ENCODE measurements at regions of chr3 and their contacts with region 1.

Region 1: DNA sequence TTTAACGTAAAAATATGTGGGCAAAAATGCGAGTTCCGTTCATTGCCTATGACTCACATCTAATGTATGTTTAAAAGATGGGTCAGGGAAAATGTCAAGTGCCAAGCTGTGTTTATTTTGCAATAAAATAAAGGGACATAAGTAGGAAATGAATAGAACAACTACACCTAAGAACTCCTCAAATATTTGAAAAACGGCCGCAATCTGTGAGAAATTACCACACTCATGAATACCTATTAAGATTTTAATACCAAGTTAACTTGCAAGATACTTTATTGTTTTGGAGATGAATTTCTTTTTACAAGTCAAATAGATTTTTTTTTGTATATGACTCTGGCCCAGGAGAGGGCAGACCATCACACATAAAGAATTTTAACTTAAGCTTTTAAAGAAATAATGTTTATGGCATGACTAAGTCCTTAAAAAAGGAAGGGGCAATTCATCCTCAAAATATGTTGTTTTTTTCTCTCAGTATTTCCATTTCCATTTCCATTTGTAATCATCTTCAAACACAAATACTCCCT is 152.7 kb downstream of the SUCNR1 start:
- DNase-seq: peak; percentile 95
- H3K4me3 ChIP-seq: peak overlapping the region in 1 of 3 experiments; percentile 41
- H3K27ac ChIP-seq: peak overlapping the region; percentile 89
- H3K4me1 ChIP-seq: peaks cover 41% of the 10 kb centered on the region
- H3K27me3 ChIP-seq: no peaks in the 10 kb centered on the region
- CTCF ChIP-seq: peak; percentile 16 to 19
- POLR2A ChIP-seq: peak; percentile 45

Region 2: GRCh38 chr3:151864423-151865101 is 161.5 kb before region 1 on chr3:
- CTCF ChIA-PET with region 1: no interaction called
- POLR2A ChIA-PET with region 1: no interaction called
- dilution Hi-C with region 1: no loop called
- intact Hi-C with region 1: loop called (anchors 2 kb)
- DNase-seq: peak; percentile 84
- H3K4me3 ChIP-seq: peak overlapping the region in 1 of 3 experiments; percentile 17
- H3K27ac ChIP-seq: peak overlapping the region; percentile 66
- H3K4me1 ChIP-seq: peaks cover 31% of the 10 kb centered on the region
- H3K27me3 ChIP-seq: no peaks in the 10 kb centered on the region
- CTCF ChIP-seq: no peak
- POLR2A ChIP-seq: no peak

Region 3: DNA sequence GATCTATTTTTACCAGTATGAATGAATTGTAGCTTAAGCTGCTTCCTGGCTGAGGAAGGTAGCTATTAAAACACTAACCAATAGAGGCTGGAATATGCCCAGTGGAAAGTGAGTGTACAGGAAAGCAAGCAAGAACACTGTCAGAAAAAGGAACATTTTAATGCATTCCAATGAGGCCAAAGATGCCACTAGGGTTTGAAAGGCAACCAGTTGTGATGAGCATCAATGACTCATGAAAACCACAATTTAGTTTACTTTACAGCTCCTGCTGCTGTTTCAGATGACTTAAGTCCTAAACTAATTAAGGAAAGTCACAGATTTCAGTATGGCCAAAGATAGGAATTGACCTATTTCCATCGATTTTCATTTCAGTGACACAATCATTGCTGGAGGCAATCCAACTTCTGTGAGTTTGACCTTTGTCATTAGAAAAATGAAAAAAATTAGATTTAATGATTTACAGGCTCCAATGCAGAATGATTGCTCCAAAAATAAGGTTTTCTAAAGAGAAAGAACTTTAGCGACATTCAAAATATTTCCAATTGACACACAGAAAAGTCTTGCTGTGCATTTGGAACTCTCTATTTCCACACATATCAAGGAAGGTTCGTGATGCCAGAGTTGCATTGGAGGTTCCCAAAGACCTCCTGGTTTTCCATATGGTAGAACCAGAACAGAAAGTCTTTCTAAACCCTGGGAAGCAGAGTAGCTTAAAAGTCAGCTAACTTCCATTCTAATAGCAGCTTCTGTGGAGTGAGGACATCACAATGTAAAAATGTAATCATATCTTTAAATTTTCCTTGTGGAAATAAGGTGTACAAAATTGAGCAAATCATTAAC is 49.7 kb before region 1 on chr3:
- CTCF ChIA-PET with region 1: interaction called, 12 read pairs
- POLR2A ChIA-PET with region 1: no interaction called
- dilution Hi-C with region 1: no loop called
- intact Hi-C with region 1: loop called (anchors 1 kb)
- DNase-seq: peak; percentile 99
- H3K4me3 ChIP-seq: peak overlapping the region in 1 of 3 experiments; percentile 3
- H3K27ac ChIP-seq: peak overlapping the region; percentile 90
- H3K4me1 ChIP-seq: peaks cover 32% of the 10 kb centered on the region
- H3K27me3 ChIP-seq: no peaks in the 10 kb centered on the region
- CTCF ChIP-seq: no peak
- POLR2A ChIP-seq: no peak

Region 4: DNA sequence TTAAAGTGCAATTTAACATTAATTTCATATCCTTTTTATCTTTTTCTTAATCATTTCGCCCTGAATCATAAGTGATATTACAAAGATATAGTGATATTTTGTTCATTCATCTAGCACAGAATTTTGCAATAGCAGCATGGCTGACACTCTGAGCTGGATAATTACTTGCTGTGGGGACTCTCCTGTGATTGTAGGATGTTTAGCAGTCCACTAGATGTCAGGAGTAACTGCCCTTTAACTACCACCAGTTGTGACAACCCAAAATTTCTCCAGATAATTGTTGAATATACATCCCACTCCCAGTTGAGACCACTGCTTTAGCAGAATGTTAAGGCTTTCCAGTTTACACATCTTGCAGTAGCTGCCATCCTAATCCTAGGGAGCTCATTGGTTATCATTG is 45.8 kb after region 1 on chr3:
- CTCF ChIA-PET with region 1: interaction called, 12 read pairs
- POLR2A ChIA-PET with region 1: no interaction called
- dilution Hi-C with region 1: no loop called
- intact Hi-C with region 1: loop called (anchors 1 kb)
- DNase-seq: peak; percentile 50
- H3K4me3 ChIP-seq: no peak overlapping the region
- H3K27ac ChIP-seq: no peak overlapping the region
- H3K4me1 ChIP-seq: peaks cover 4% of the 10 kb centered on the region
- H3K27me3 ChIP-seq: no peaks in the 10 kb centered on the region
- CTCF ChIP-seq: peak; percentile 37 to 40
- POLR2A ChIP-seq: no peak

Region 5: DNA sequence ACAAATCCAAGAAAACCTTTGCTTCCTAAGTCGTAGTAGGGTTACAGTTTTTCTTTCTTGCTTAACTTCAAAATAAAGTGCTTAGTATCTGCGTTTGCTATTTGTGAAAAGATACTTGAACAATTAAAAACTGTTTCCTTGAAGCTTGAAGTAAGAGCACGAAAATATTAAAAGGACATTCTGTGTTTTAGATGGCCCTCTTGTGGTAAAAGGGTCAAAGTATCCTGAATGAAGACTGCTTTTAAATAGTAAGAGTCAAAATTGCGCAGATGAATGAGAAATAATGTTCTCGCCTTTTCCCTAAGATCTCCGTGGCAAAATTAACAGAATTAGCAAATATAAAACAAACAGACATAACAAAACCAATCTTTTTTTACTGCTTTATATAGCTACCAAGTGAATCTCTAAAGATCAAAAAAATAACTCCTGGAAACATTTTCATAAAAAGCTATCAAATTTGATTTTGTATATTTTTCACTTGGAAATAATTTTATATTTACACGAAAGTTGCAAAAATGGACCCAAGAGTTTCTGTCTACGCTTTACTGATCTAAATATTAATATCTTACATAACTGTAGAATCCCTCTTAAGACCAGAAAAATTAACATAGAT is 418.0 kb after region 1 on chr3:
- CTCF ChIA-PET with region 1: interaction called, 16 read pairs
- POLR2A ChIA-PET with region 1: no interaction called
- dilution Hi-C with region 1: no loop called
- intact Hi-C with region 1: loop called (anchors 2 kb)
- DNase-seq: peak; percentile 80
- H3K4me3 ChIP-seq: no peak overlapping the region
- H3K27ac ChIP-seq: peak overlapping the region; percentile 14
- H3K4me1 ChIP-seq: peaks cover 12% of the 10 kb centered on the region
- H3K27me3 ChIP-seq: no peaks in the 10 kb centered on the region
- CTCF ChIP-seq: peak; percentile 25 to 46
- POLR2A ChIP-seq: no peak

Region 6: GRCh38 chr3:152785051-152785450 is 759.0 kb after region 1 on chr3:
- CTCF ChIA-PET with region 1: no interaction called
- POLR2A ChIA-PET with region 1: no interaction called
- dilution Hi-C with region 1: no loop called
- intact Hi-C with region 1: no loop called
- DNase-seq: no peak
- H3K4me3 ChIP-seq: no peak overlapping the region
- H3K27ac ChIP-seq: no peak overlapping the region
- H3K4me1 ChIP-seq: no peaks in the 10 kb centered on the region
- H3K27me3 ChIP-seq: no peaks in the 10 kb centered on the region
- CTCF ChIP-seq: no peak
- POLR2A ChIP-seq: no peak

Measured in endothelial cell of umbilical vein (primary cell).